OCI-LY7 (cell line): ENCODE measurements at regions of chr22 and their contacts with region 1.

Region 1: DNA sequence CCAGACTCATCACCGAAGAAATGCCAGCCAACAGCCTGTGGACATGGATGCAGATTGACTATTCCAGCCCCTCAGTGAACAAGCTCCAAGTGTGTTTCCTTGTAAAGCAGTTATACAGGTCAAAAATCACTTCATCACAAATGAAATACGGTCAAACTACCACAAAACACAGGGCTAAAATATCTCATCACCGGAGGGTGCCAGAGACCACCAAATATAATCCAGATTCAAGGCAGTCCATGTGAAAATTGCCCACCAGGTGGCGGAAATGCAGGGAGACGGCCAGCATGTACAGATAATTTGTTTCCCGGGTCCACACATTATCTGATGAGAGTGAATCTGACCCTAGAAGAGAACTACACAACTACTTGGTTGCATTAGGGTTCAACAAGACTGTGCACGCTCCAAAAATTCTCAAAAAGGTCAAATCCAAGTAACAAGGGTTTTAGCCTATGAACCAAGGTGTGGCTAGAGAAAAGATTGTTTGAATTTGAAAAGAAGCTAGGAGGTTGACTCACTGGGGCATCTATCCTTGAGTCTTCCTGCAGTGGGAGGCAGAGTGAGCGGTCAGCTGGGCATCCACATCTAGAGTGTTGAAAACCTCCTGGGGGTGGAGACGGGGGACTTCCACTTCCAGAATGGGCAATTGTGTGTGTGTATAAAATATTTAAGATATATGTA is 71.7 kb downstream of the IGLL5 start:
- DNase-seq: peak; percentile 93
- H3K4me3 ChIP-seq: no peak overlapping the region
- H3K27ac ChIP-seq: no peak overlapping the region
- H3K4me1 ChIP-seq: peaks cover 35% of the 10 kb centered on the region
- CTCF ChIP-seq: peak; percentile 100

Region 2: DNA sequence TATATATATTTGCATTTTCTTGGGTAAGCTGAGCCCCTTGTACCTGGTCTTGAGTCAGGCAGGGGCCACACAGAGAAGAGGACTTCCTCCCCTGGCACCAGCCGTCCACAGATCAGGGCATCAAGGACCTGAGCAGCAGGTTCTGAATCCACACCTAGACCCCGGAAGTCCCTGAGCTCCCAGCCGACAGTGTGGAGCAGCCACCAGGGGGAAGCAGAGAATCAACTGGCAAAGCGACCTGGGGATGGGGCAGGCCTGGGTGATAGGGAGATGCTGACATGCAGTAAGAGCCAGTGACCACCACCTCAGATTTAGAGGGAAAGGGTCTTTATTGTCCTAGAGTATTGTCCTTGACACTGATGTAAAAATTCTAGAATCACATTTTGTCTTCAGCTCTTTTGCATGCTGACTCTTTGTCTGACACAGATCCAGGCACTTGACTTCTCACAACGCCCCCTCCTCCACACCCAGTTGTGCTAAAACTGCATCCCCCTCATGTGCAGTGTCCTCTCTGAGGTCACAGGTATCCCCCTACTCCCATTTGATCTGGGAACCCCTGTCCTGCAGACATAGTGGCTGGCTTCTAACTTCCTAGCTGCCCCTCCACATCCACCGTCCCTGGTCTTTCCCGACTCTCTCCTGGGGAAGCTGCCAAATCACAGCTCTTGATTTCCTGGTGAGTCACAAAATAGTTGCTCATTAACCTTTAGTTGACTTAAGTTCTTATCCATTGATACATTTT is 205.6 kb before region 1 on chr22:
- CTCF ChIA-PET with region 1: no interaction called
- POLR2A ChIA-PET with region 1: no interaction called
- intact Hi-C with region 1: loop called (anchors 5 kb)
- DNase-seq: peak; percentile 86
- H3K4me3 ChIP-seq: peak overlapping the region; percentile 7
- H3K27ac ChIP-seq: peak overlapping the region; percentile 33
- H3K4me1 ChIP-seq: peaks cover 19% of the 10 kb centered on the region
- CTCF ChIP-seq: peak; percentile 93

Region 3: DNA sequence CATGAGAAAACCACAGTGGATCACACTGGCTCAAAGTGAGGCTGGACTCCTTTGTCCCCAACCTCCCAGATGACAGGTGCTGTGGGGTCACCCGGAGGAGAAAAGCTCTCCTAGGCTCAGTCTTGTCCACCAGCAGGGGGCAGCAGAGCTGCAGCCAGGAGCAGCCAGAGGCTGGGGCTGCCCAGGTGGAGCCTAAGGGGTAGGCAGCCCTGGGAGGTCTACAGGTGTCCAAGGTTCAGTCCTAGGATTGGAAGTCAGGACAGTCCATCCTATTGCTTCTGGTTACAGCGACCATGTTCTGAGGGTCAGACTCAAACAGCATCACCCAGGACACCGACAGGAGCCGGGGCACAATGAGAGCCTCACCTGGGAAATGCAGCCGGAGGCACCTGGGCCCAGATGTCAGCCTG is 149.3 kb before region 1 on chr22:
- CTCF ChIA-PET with region 1: interaction called, 3 read pairs
- POLR2A ChIA-PET with region 1: interaction called, 4 read pairs
- intact Hi-C with region 1: loop called (anchors 1 kb)
- DNase-seq: peak; percentile 77
- H3K4me3 ChIP-seq: no peak overlapping the region
- H3K27ac ChIP-seq: no peak overlapping the region
- H3K4me1 ChIP-seq: peaks cover 35% of the 10 kb centered on the region
- CTCF ChIP-seq: peak; percentile 89

Region 4: GRCh38 chr22:22877523-22878210 is 81.6 kb before region 1 on chr22:
- CTCF ChIA-PET with region 1: interaction called, 6 read pairs
- POLR2A ChIA-PET with region 1: interaction called, 3 read pairs
- intact Hi-C with region 1: loop called (anchors 1 kb)
- DNase-seq: peak; percentile 75
- H3K4me3 ChIP-seq: no peak overlapping the region
- H3K27ac ChIP-seq: no peak overlapping the region
- H3K4me1 ChIP-seq: peaks cover 53% of the 10 kb centered on the region
- CTCF ChIP-seq: peak; percentile 84

Region 5: GRCh38 chr22:23036684-23037428 is 77.6 kb after region 1 on chr22:
- CTCF ChIA-PET with region 1: no interaction called
- POLR2A ChIA-PET with region 1: interaction called, 7 read pairs
- intact Hi-C with region 1: loop called (anchors 2 kb)
- DNase-seq: peak; percentile 58
- H3K4me3 ChIP-seq: peak overlapping the region; percentile 17
- H3K27ac ChIP-seq: peak overlapping the region; percentile 98
- H3K4me1 ChIP-seq: peaks cover 80% of the 10 kb centered on the region
- CTCF ChIP-seq: no peak

Region 6: DNA sequence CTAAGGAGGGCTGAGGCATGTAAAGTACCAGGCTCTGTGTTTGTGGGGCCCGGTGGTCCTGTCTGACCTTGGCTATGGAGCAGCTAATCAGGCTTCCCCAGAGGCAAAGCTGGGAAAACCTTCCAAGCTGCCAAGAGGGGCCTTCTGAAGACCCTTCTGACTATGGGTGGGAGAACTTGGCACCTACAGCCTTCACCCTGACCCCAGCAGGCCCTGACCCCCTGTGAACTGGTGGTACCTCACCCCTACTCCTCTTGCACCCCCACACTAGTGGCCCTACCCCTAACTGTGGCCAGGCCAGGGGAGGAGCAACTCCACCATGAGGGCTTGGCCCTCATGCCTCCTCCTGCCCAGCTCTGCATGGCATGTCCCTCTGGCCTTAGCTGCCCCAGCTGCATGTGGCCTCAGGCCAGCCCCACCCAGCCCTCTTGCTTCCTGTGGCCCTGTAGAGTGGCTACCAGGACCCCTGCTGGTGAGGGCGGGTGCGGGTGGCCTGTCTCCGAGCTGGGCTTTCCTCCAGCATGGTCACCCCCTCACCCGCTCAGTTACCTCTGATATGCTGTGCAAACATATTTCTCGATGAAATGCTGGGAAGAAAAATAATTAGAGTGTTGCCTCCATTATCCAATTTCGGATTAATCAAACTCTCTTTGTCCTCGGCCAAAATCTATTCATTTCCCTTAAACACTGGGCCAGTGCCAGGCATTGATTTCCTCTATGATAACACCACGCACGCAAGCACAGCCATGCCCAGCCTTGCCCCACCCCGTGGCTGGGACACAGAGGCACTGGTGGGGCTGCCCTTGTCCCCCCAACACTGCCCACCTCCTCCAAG is 118.6 kb after region 1 on chr22:
- CTCF ChIA-PET with region 1: no interaction called
- POLR2A ChIA-PET with region 1: no interaction called
- intact Hi-C with region 1: no loop called
- DNase-seq: no peak
- H3K4me3 ChIP-seq: no peak overlapping the region
- H3K27ac ChIP-seq: no peak overlapping the region
- H3K4me1 ChIP-seq: peaks cover 19% of the 10 kb centered on the region
- CTCF ChIP-seq: 0 out of 2 replicates have a peak, but pooled peaks have one; percentile 26

Region 7: DNA sequence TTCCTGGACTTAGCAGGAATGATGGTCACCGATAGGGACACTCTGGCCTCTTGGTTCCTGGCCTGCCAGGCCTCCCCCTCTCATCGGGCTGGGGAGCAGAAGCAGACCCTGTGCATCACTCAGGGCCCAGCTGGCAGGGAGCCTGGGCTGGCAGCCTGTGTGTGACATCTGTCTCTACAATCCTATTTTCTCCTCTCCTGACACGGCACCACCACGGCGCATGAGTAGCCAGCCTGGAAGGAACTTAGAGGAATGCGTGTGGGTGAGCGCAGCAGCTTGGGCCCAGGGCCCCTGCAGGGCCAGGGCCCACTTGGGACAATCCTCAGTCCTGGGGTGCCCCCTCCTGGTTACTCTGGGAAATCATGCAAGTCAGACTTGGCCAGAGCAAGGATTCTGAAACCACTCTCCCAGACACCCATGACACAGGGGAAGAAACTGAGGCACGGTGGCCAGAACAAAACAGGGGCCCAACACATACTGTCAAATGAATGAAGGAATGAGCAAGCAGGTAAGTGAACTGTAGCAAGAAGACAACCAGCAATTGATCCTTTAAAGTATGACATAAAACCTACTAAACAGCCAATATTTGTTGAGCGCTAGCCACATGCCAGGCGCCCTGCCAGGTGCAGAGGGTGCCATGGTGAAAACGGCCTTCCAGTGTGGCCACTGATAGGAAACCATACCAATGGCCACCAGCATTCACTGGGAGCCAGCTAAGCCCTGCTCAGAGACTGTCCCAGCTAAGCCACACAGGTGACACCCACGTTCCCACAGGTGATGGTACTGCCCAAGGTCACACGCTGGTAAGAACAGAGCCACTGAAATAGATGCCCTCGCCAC is 169.2 kb after region 1 on chr22:
- CTCF ChIA-PET with region 1: interaction called, 23 read pairs
- POLR2A ChIA-PET with region 1: interaction called, 4 read pairs
- intact Hi-C with region 1: loop called (anchors 1 kb)
- DNase-seq: peak; percentile 87
- H3K4me3 ChIP-seq: no peak overlapping the region
- H3K27ac ChIP-seq: no peak overlapping the region
- H3K4me1 ChIP-seq: peaks cover 17% of the 10 kb centered on the region
- CTCF ChIP-seq: peak; percentile 97

Region 8: GRCh38 chr22:23385291-23386244 is 426.3 kb after region 1 on chr22:
- CTCF ChIA-PET with region 1: no interaction called
- POLR2A ChIA-PET with region 1: no interaction called
- intact Hi-C with region 1: loop called (anchors 10 kb)
- DNase-seq: peak; percentile 75
- H3K4me3 ChIP-seq: no peak overlapping the region
- H3K27ac ChIP-seq: no peak overlapping the region
- H3K4me1 ChIP-seq: no peaks in the 10 kb centered on the region
- CTCF ChIP-seq: peak; percentile 89